ENCODE measurements at regions of chr3 and their contacts with region 1.

Region 1: GRCh38 chr3:143674100-143674968 is 173.9 kb downstream of the SLC9A9 start:
- DNase-seq: peak; percentile 54 to 81 (median 72)
- ATAC-seq: peak; percentile 97
- H3K4me3 ChIP-seq: no peak overlapping the region
- H3K4me3 Mint-ChIP-seq: peak overlapping the region; percentile 36
- H3K27ac ChIP-seq: no peak overlapping the region
- H3K27ac Mint-ChIP-seq: peak overlapping the region; percentile 60
- H3K4me1 ChIP-seq: peaks cover 4% of the 10 kb centered on the region
- H3K4me1 Mint-ChIP-seq: peaks cover 8% of the 10 kb centered on the region
- H3K27me3 ChIP-seq: no peaks in the 10 kb centered on the region
- H3K27me3 Mint-ChIP-seq: no peaks in the 10 kb centered on the region
- CTCF ChIP-seq: peak; percentile 90

Region 2: DNA sequence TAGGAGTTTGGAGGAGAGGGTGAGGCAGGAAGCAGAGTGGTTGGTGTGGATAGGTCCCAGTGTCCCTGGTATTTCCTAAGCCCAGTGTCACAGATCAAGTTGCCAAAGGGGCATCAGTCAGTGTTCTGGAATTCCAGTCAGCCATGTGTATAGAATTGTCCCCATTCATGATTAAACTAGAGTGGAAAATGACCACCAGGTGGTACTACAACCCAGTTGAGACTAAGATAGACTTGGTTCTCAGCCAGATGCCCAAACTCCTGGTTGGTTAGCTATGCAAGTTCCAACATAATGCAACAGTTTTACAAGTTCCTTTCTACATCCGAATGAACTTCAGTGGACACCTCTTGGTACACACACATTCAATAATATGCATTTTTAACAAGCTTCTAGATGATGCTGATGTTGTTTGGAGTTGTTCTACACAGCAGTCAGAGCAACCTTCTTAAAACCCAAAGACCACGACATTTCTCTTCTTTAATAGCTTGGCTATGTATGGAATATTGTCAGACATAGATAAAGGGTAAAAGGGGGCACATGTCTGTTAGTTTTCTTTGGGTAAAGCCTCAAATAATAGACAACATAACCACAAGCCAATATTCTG is 1087.4 kb before region 1 on chr3:
- CTCF ChIA-PET with region 1: no interaction called
- POLR2A ChIA-PET with region 1: no interaction called
- intact Hi-C with region 1: loop called in 1 of 2 experiments (anchors 10 kb)
- DNase-seq: peak in 3 of 9 experiments; percentile 26 to 72 (median 62)
- ATAC-seq: peak; percentile 68
- H3K4me3 ChIP-seq: no peak overlapping the region
- H3K4me3 Mint-ChIP-seq: no peak overlapping the region
- H3K27ac ChIP-seq: no peak overlapping the region
- H3K27ac Mint-ChIP-seq: no peak overlapping the region
- H3K4me1 ChIP-seq: no peaks in the 10 kb centered on the region
- H3K4me1 Mint-ChIP-seq: no peaks in the 10 kb centered on the region
- H3K27me3 ChIP-seq: no peaks in the 10 kb centered on the region
- H3K27me3 Mint-ChIP-seq: peaks cover 14% of the 10 kb centered on the region
- CTCF ChIP-seq: peak; percentile 60

Region 3: GRCh38 chr3:143037867-143038266 is 636.5 kb before region 1 on chr3:
- CTCF ChIA-PET with region 1: interaction called, 3 read pairs
- POLR2A ChIA-PET with region 1: no interaction called
- intact Hi-C with region 1: loop called in 1 of 2 experiments (anchors 2 kb)
- DNase-seq: no peak
- ATAC-seq: no peak
- H3K4me3 ChIP-seq: no peak overlapping the region
- H3K4me3 Mint-ChIP-seq: no peak overlapping the region
- H3K27ac ChIP-seq: no peak overlapping the region
- H3K27ac Mint-ChIP-seq: no peak overlapping the region
- H3K4me1 ChIP-seq: no peaks in the 10 kb centered on the region
- H3K4me1 Mint-ChIP-seq: peaks cover 8% of the 10 kb centered on the region
- H3K27me3 ChIP-seq: no peaks in the 10 kb centered on the region
- H3K27me3 Mint-ChIP-seq: no peaks in the 10 kb centered on the region
- CTCF ChIP-seq: no peak

Region 4: GRCh38 chr3:143152043-143152442 is 522.3 kb before region 1 on chr3:
- CTCF ChIA-PET with region 1: interaction called, 4 read pairs
- POLR2A ChIA-PET with region 1: no interaction called
- intact Hi-C with region 1: loop called in 1 of 2 experiments (anchors 1 kb)
- DNase-seq: peak in 3 of 9 experiments; percentile 10 to 34 (median 25)
- ATAC-seq: peak; percentile 48
- H3K4me3 ChIP-seq: no peak overlapping the region
- H3K4me3 Mint-ChIP-seq: no peak overlapping the region
- H3K27ac ChIP-seq: no peak overlapping the region
- H3K27ac Mint-ChIP-seq: no peak overlapping the region
- H3K4me1 ChIP-seq: peaks cover 12% of the 10 kb centered on the region
- H3K4me1 Mint-ChIP-seq: peaks cover 29% of the 10 kb centered on the region
- H3K27me3 ChIP-seq: no peaks in the 10 kb centered on the region
- H3K27me3 Mint-ChIP-seq: no peaks in the 10 kb centered on the region
- CTCF ChIP-seq: no peak

Region 5: GRCh38 chr3:143763564-143764162 is 89.3 kb after region 1 on chr3:
- CTCF ChIA-PET with region 1: interaction called, 3 read pairs
- POLR2A ChIA-PET with region 1: no interaction called
- intact Hi-C with region 1: loop called in 1 of 2 experiments (anchors 1 kb)
- DNase-seq: peak in 1 of 9 experiments; percentile 36
- ATAC-seq: no peak
- H3K4me3 ChIP-seq: no peak overlapping the region
- H3K4me3 Mint-ChIP-seq: no peak overlapping the region
- H3K27ac ChIP-seq: no peak overlapping the region
- H3K27ac Mint-ChIP-seq: no peak overlapping the region
- H3K4me1 ChIP-seq: peaks cover 5% of the 10 kb centered on the region
- H3K4me1 Mint-ChIP-seq: peaks cover 16% of the 10 kb centered on the region
- H3K27me3 ChIP-seq: no peaks in the 10 kb centered on the region
- H3K27me3 Mint-ChIP-seq: no peaks in the 10 kb centered on the region
- CTCF ChIP-seq: peak; percentile 23

Measured in CD8-positive, alpha-beta T cell (primary cell).